ENCODE measurements at regions of chr4 and their contacts with region 1.

Region 1: GRCh38 chr4:141307241-141307689 is 86.6 kb downstream of the ZNF330 start:
- DNase-seq: peak; percentile 67 to 76 (median 73)
- H3K4me3 ChIP-seq: no peak overlapping the region
- H3K4me3 Mint-ChIP-seq: peak overlapping the region in 1 of 2 donors; percentile 68
- H3K27ac ChIP-seq: peak overlapping the region; percentile 28 to 49
- H3K27ac Mint-ChIP-seq: peak overlapping the region in 6 of 7 donors; percentile 51 to 91 (median 76)
- H3K4me1 ChIP-seq: peaks cover 23 to 44% of the 10 kb centered on the region in 2 donors
- H3K4me1 Mint-ChIP-seq: peaks cover 50% of the 10 kb centered on the region
- H3K27me3 ChIP-seq: no peaks in the 10 kb centered on the region
- H3K27me3 Mint-ChIP-seq: no peaks in the 10 kb centered on the region
- CTCF ChIP-seq: peak; percentile 88

Region 2: DNA sequence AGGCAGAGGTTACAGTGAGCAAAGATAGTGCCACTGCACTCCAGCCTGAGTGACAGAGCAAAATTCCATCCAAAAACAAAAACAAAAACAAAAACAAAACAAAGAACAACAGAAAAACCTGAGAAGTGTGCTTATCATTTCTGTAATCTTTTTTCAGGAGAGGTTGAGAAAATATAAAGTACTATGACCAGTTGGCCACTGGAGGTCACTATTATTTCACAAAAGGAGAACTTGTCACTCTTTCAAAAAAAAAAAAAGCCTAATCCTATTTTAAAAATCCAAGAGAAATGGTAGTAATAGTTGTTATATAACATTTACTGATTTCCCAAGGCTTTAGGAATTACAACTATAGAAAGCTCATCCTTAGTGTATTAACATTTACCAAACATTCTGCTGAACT is 149.0 kb before region 1 on chr4:
- intact Hi-C with region 1: no loop called
- DNase-seq: peak in 2 of 3 donors; percentile 17 to 24
- H3K4me3 ChIP-seq: no peak overlapping the region
- H3K4me3 Mint-ChIP-seq: no peak overlapping the region
- H3K27ac ChIP-seq: no peak overlapping the region
- H3K27ac Mint-ChIP-seq: no peak overlapping the region
- H3K4me1 ChIP-seq: no peaks in the 10 kb centered on the region
- H3K4me1 Mint-ChIP-seq: no peaks in the 10 kb centered on the region
- H3K27me3 ChIP-seq: no peaks in the 10 kb centered on the region
- H3K27me3 Mint-ChIP-seq: peaks cover 2 to 4% (median 2%) of the 10 kb centered on the region in 3 donors
- CTCF ChIP-seq: peak; percentile 33

Region 3: DNA sequence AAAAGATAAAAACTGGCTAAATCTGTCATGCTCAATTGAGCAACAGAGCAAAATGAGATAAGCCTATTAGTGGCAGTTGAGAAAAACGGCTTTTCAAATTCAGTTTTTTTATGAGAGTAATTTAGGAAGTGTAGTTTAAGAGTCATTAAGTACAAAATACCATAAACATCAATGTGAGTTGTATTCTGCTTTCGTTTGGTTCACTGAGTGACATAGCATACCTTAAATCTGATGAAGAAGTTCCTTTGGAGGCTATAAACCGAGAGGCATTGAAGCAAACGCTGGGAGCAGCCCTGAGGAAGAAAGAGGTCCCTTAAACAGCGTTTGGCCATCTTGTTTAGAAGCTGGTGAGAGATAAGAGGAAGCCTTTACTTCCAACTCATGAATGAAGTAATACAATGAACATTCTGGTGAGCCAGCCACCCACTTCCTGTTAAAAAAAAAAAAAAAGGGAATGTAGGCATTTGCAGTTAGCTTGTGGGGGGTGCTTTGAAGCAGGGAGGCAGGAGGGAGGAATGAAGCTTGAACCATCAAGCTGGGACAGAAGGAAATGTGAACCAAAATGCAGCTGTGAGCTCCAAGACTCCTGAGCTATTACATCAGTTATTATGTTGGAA is 45.8 kb after region 1 on chr4:
- intact Hi-C with region 1: loop called (anchors 2 kb)
- DNase-seq: peak; percentile 66 to 81 (median 79)
- H3K4me3 ChIP-seq: peak overlapping the region; percentile 21 to 65 (median 53)
- H3K4me3 Mint-ChIP-seq: peak overlapping the region; percentile 50 to 78
- H3K27ac ChIP-seq: peak overlapping the region; percentile 48 to 91
- H3K27ac Mint-ChIP-seq: peak overlapping the region; percentile 89 to 98 (median 94)
- H3K4me1 ChIP-seq: peaks cover 57 to 71% of the 10 kb centered on the region in 2 donors
- H3K4me1 Mint-ChIP-seq: peaks cover 72% of the 10 kb centered on the region
- H3K27me3 ChIP-seq: no peaks in the 10 kb centered on the region
- H3K27me3 Mint-ChIP-seq: peaks cover 0 to 2% (median 0%) of the 10 kb centered on the region in 3 donors
- CTCF ChIP-seq: no peak

Region 4: DNA sequence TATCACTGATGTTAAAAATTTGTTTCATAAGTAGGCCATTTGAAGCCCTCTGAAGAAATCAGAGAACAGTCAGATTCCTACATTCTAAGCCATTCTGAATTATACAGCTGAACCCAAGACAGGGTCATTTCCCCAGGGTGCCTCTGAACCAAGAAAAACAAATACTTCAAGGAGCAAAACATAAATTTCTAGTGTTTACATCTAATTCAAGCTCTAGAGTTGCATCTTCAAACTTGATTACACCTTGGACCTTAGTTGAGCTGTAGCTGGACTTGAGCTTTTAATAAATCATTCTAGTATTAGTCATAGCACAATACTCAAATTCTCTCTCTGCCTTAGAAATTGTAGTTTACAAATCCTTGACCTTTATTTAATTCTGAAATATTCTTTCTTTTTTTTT is 241.5 kb after region 1 on chr4:
- intact Hi-C with region 1: no loop called
- DNase-seq: no peak
- H3K4me3 ChIP-seq: no peak overlapping the region
- H3K4me3 Mint-ChIP-seq: no peak overlapping the region
- H3K27ac ChIP-seq: no peak overlapping the region
- H3K27ac Mint-ChIP-seq: no peak overlapping the region
- H3K4me1 ChIP-seq: no peaks in the 10 kb centered on the region
- H3K4me1 Mint-ChIP-seq: no peaks in the 10 kb centered on the region
- H3K27me3 ChIP-seq: no peaks in the 10 kb centered on the region
- H3K27me3 Mint-ChIP-seq: no peaks in the 10 kb centered on the region
- CTCF ChIP-seq: no peak

Region 5: GRCh38 chr4:141711014-141711610 is 403.8 kb after region 1 on chr4:
- intact Hi-C with region 1: loop called (anchors 10 kb)
- DNase-seq: peak in 2 of 3 donors; percentile 10 to 38
- H3K4me3 ChIP-seq: no peak overlapping the region
- H3K4me3 Mint-ChIP-seq: no peak overlapping the region
- H3K27ac ChIP-seq: no peak overlapping the region
- H3K27ac Mint-ChIP-seq: peak overlapping the region in 2 of 7 donors; percentile 6
- H3K4me1 ChIP-seq: peaks cover 9 to 19% of the 10 kb centered on the region in 2 donors
- H3K4me1 Mint-ChIP-seq: peaks cover 33% of the 10 kb centered on the region
- H3K27me3 ChIP-seq: no peaks in the 10 kb centered on the region
- H3K27me3 Mint-ChIP-seq: peaks cover 2 to 3% (median 2%) of the 10 kb centered on the region in 3 donors
- CTCF ChIP-seq: peak; percentile 80

Measured in CD14-positive monocyte (primary cell).